Activated naive CD4-positive, alpha-beta T cell treated with anti-CD3 and anti-CD28 coated beads for 36 hours (primary cell): ENCODE measurements at regions of chr14 and their contacts with region 1.

Region 1: GRCh38 chr14:91177073-91178034 is 63.5 kb downstream of the DGLUCY start:
- DNase-seq: peak; percentile 84
- H3K4me3 Mint-ChIP-seq: no peak overlapping the region
- H3K27ac Mint-ChIP-seq: peak overlapping the region; percentile 58
- H3K4me1 Mint-ChIP-seq: peaks cover 9% of the 10 kb centered on the region
- H3K27me3 Mint-ChIP-seq: no peaks in the 10 kb centered on the region

Region 2: GRCh38 chr14:90758028-90758889 is 419.1 kb before region 1 on chr14:
- CTCF ChIA-PET with region 1: interaction called, 3 read pairs
- intact Hi-C with region 1: loop called (anchors 5 kb)
- DNase-seq: peak; percentile 92
- H3K4me3 Mint-ChIP-seq: peak overlapping the region; percentile 76
- H3K27ac Mint-ChIP-seq: peak overlapping the region; percentile 80
- H3K4me1 Mint-ChIP-seq: peaks cover 14% of the 10 kb centered on the region
- H3K27me3 Mint-ChIP-seq: peaks cover 2% of the 10 kb centered on the region

Region 3: GRCh38 chr14:91138511-91139359 is 38.6 kb before region 1 on chr14:
- CTCF ChIA-PET with region 1: interaction called, 30 read pairs
- intact Hi-C with region 1: loop called (anchors 1 kb)
- DNase-seq: peak; percentile 80
- H3K4me3 Mint-ChIP-seq: no peak overlapping the region
- H3K27ac Mint-ChIP-seq: peak overlapping the region; percentile 59
- H3K4me1 Mint-ChIP-seq: peaks cover 43% of the 10 kb centered on the region
- H3K27me3 Mint-ChIP-seq: no peaks in the 10 kb centered on the region

Region 4: DNA sequence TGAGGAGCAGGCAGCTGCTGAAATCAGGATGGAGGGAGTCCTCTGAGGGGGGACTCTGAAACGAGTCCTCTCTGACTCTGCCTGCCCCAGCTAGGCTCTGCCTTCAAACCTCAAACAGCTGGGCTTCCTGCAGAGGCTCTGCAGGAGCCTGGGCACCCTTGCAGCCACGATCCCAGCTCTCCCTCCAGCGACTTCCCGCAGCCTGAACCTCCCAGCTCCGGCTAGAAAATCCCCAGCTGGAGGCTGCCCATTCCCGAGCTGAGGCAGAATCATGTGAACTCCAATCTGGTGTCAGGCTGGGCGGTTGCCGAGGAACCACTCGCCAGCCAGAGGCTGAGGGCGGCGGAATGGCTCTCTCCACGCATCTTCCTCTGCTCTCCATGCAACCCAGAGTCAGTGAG is 67.1 kb after region 1 on chr14 and contains the start of gene GPR68:
- CTCF ChIA-PET with region 1: interaction called, 11 read pairs
- intact Hi-C with region 1: loop called (anchors 1 kb)
- DNase-seq: peak; percentile 39
- H3K4me3 Mint-ChIP-seq: peak within 1 kb of the TSS; percentile 55
- H3K27ac Mint-ChIP-seq: peak within 1 kb of the TSS; percentile 97
- H3K4me1 Mint-ChIP-seq: peaks cover 81% of the 10 kb centered on the region
- H3K27me3 Mint-ChIP-seq: no peaks in the 10 kb centered on the region
- total RNA-seq, gene GPR68: 1.2 to 1.3 TPM

Region 5: GRCh38 chr14:91264151-91265150 is 87.1 kb after region 1 on chr14:
- CTCF ChIA-PET with region 1: interaction called, 11 read pairs
- intact Hi-C with region 1: loop called (anchors 1 kb)
- DNase-seq: no peak
- H3K4me3 Mint-ChIP-seq: peak overlapping the region; percentile 51
- H3K27ac Mint-ChIP-seq: no peak overlapping the region
- H3K4me1 Mint-ChIP-seq: peaks cover 50% of the 10 kb centered on the region
- H3K27me3 Mint-ChIP-seq: no peaks in the 10 kb centered on the region

Region 6: GRCh38 chr14:91317381-91318308 is 140.3 kb after region 1 on chr14:
- CTCF ChIA-PET with region 1: interaction called, 3 read pairs
- intact Hi-C with region 1: loop called (anchors 1 kb)
- DNase-seq: peak; percentile 87
- H3K4me3 Mint-ChIP-seq: peak overlapping the region; percentile 60
- H3K27ac Mint-ChIP-seq: peak overlapping the region; percentile 95
- H3K4me1 Mint-ChIP-seq: peaks cover 72% of the 10 kb centered on the region
- H3K27me3 Mint-ChIP-seq: no peaks in the 10 kb centered on the region